OCI-LY7 (cell line): ENCODE measurements at regions of chr3 and their contacts with region 1.

Region 1: DNA sequence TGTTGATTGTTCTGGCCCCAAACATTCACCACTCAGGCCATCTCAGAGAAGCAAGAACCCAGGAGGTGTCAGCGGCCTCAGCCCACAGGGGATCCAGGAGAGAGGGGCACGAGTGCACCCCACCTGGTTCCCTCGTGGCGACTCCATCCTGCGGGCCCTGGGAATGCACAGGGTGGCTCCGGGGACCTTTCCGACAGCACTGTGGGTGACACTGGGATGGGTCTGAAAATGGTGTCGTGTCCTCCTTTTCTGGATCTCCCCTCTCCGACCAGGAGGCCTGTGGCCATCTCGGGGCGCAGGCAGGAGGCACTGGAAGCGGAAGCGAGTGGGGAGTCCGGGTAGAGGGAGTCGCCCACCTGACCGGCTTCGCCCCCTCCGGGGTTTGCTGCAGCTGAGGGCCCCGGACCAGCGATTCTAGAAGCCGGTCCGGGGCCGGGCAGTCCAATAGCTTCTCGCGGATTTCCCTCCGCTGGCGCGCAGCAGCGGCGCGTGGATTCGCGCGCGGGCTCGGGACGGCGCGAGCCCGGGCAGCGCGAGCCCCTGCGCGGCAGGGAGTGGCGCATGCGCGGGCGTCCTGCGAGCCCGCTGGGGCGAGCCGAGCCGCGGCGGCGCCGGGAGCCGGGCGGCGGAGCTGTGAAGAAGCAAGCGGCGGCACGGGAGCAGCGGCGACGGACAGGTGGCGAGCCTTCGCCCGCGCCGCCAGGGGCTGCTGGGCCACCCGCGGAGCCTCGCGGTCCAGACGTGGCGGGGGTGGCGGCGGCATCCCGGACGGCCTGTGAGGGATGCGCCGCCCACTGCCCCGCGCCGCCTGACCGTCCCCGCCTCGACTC is at the start of gene DOCK3:
- DNase-seq: no peak
- H3K4me3 ChIP-seq: no peak within 1 kb of the TSS
- H3K27ac ChIP-seq: no peak within 1 kb of the TSS
- H3K4me1 ChIP-seq: no peaks in the 10 kb centered on the region
- CTCF ChIP-seq: no peak
- total RNA-seq, gene DOCK3: not detected in 2 replicates

Region 2: GRCh38 chr3:50550079-50550741 is 124.4 kb before region 1 on chr3:
- CTCF ChIA-PET with region 1: no interaction called
- POLR2A ChIA-PET with region 1: no interaction called
- intact Hi-C with region 1: no loop called
- DNase-seq: peak; percentile 59
- H3K4me3 ChIP-seq: no peak overlapping the region
- H3K27ac ChIP-seq: no peak overlapping the region
- H3K4me1 ChIP-seq: no peaks in the 10 kb centered on the region
- CTCF ChIP-seq: peak; percentile 76

Region 3: DNA sequence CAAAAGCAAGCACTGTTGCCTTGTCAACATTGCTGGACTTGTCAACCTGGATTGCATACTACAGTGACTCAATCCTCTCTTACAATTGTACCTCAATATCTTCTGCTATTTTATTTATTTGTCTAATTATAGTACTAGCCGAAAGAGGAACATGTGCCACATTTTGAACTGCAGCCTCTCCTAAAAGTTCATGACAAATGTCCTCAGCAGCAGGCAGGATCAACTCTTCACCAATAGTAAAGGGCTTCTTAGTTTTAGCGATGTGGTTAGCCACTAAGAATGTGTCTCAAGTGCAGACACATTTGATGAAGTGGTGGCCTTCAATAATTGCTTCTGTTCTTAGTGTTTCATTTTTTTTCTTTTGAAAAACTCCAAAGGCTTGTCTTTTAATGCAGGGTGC is 13.4 kb after region 1 on chr3:
- CTCF ChIA-PET with region 1: no interaction called
- POLR2A ChIA-PET with region 1: no interaction called
- intact Hi-C with region 1: no loop called
- DNase-seq: no peak
- H3K4me3 ChIP-seq: no peak overlapping the region
- H3K27ac ChIP-seq: no peak overlapping the region
- H3K4me1 ChIP-seq: no peaks in the 10 kb centered on the region
- CTCF ChIP-seq: no peak

Region 4: GRCh38 chr3:50708620-50709019 is 34.1 kb after region 1 on chr3:
- CTCF ChIA-PET with region 1: no interaction called
- POLR2A ChIA-PET with region 1: interaction called, 10 read pairs
- intact Hi-C with region 1: no loop called
- DNase-seq: no peak
- H3K4me3 ChIP-seq: no peak overlapping the region
- H3K27ac ChIP-seq: no peak overlapping the region
- H3K4me1 ChIP-seq: no peaks in the 10 kb centered on the region
- CTCF ChIP-seq: no peak